ENCODE measurements at regions of chr5 and their contacts with region 1.

Region 1: DNA sequence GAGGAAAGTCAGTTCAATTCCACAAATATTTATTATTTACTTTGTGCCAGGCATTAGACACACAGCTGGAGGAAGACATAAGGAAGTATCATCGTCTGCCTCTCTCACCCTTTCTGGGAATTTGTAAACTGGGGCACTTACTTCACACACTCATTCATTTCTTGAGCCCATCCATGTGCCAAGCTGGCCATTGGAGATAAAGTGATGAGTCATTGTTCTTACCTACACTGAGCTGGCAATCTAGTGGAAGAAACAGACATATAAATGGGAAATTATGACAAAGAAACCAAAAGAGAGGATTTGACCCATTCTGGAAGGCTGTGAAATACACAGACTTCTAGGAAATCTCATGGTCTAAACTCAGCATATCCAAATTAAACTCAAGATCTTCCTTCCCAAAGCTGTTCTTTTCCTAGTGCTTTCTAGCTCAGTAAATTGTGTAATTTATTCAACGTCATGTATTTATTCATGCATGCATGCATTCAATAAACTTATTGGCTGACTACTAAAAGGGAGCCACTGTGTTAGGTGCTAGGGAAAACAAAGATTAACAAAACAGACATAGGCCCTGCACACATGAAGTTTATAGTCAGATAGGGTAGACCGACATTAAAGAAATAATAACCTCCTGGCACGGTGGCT is 65.3 kb downstream of the SH3RF2 start:
- DNase-seq: peak; percentile 92
- H3K4me3 ChIP-seq: no peak overlapping the region
- H3K27ac ChIP-seq: peak overlapping the region; percentile 99
- H3K4me1 ChIP-seq: peaks cover 80% of the 10 kb centered on the region
- H3K27me3 ChIP-seq: no peaks in the 10 kb centered on the region
- CTCF ChIP-seq: no peak

Region 2: GRCh38 chr5:145825751-145826180 is 175.9 kb before region 1 on chr5:
- CTCF ChIA-PET with region 1: interaction called, 3 read pairs
- POLR2A ChIA-PET with region 1: interaction called, 10 read pairs
- intact Hi-C with region 1: loop called (anchors 2 kb)
- DNase-seq: peak; percentile 83
- H3K4me3 ChIP-seq: no peak overlapping the region
- H3K27ac ChIP-seq: no peak overlapping the region
- H3K4me1 ChIP-seq: peaks cover 69% of the 10 kb centered on the region
- H3K27me3 ChIP-seq: no peaks in the 10 kb centered on the region
- CTCF ChIP-seq: peak; percentile 87

Region 3: DNA sequence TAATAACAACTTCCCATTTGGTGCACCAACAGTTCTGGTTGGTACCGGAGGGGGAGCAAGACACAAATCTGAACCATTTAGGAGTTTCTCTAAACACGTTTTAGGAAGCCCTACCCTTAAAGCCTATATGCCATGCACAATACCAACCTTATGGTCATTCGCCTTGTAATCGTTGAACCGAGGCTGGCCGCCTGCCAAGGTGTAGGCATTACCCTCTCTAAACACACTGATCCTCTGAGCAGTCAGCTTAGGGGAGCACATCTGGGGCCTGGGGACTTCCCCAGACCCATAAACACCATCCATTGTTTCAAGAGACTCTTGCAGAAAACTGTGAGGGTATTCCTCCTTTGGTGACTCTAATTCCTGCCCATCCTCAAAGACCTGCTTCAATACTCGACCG is 129.2 kb before region 1 on chr5:
- CTCF ChIA-PET with region 1: no interaction called
- POLR2A ChIA-PET with region 1: no interaction called
- intact Hi-C with region 1: no loop called
- DNase-seq: no peak
- H3K4me3 ChIP-seq: no peak overlapping the region
- H3K27ac ChIP-seq: no peak overlapping the region
- H3K4me1 ChIP-seq: no peaks in the 10 kb centered on the region
- H3K27me3 ChIP-seq: no peaks in the 10 kb centered on the region
- CTCF ChIP-seq: no peak

Region 4: GRCh38 chr5:145925353-145925752 is 76.3 kb before region 1 on chr5:
- CTCF ChIA-PET with region 1: interaction called, 3 read pairs
- POLR2A ChIA-PET with region 1: interaction called, 7 read pairs
- intact Hi-C with region 1: loop called (anchors 1 kb)
- DNase-seq: peak; percentile 88
- H3K4me3 ChIP-seq: no peak overlapping the region
- H3K27ac ChIP-seq: peak overlapping the region; percentile 85
- H3K4me1 ChIP-seq: peaks cover 27% of the 10 kb centered on the region
- H3K27me3 ChIP-seq: no peaks in the 10 kb centered on the region
- CTCF ChIP-seq: no peak

Region 5: DNA sequence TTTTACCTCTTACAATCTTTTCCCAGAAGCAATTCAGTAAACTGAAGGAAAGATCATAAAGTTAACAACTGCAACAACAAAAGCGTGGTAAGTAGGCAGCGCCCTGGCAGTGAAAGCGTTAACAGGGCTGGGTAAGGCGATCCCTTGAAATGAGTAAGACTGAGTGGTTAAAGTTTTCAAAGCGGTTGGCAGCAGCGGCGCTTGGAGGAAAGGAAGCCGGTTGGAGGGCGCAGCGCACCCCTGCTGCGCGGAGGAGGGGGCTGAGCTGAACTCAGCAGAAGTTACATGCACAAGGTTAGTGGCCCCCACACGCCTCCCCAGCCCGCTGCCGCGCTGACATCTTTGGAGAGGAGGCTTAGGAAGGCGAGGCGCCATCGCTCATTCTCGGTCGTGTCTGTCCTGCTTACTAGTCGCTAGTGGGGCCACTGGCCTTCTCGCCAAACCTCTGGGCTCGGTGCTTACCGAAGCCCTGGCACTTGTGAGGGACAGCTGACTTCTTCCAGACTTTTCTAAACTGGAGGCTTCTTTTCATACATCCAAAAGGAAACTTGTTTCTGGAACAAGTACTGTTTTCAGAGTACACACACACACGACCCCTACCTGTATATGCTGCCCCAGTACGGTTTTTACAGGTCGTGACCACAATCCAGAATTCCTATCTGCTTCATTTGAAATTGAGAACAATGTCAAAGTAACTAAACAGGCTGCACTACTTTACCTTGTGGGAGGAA is 65.1 kb before region 1 on chr5 and contains the start of gene SH3RF2:
- CTCF ChIA-PET with region 1: no interaction called
- POLR2A ChIA-PET with region 1: no interaction called
- intact Hi-C with region 1: loop called (anchors 2 kb)
- DNase-seq: peak; percentile 96
- H3K4me3 ChIP-seq: peak within 1 kb of the TSS; percentile 45
- H3K27ac ChIP-seq: peak within 1 kb of the TSS; percentile 83
- H3K4me1 ChIP-seq: peaks cover 69% of the 10 kb centered on the region
- H3K27me3 ChIP-seq: no peaks in the 10 kb centered on the region
- CTCF ChIP-seq: no peak
- total RNA-seq, gene SH3RF2: 21.1 and 22.9 TPM in 2 replicates

Region 6: DNA sequence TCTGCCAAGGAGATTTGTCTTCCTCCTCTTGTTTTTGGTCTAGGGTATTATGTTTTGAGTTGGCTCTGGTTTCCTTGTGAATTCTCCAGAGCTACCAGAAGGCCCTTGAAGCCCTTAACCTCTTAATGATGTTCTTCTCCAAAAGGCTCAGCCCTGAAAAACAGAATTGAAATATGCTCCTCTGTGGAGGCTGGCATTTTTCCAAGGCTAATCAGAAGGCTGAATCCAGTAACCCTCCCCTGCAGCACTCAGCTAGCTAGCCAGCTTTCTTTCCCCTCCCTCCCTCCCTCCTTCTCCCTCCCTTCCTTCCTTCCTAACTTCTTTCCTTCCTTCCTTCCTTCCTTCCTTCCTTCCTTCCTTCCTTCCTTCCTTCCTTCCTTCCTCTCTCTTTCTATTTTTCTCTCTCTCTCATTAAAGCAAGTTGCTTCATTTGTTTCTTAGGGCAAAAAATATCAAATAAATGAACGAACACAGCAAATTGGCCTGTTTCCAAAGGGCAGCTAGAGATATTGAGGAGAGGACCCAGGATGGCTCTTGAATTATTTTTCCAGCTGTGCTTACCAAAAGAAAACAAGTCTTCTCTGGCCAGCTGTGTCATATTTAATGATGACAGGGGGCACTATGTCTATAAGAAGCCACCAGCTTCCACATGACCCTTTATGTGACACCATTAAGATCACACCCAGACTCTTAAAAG is 1742.2 kb after region 1 on chr5:
- CTCF ChIA-PET with region 1: no interaction called
- POLR2A ChIA-PET with region 1: no interaction called
- intact Hi-C with region 1: loop called (anchors 5 kb)
- DNase-seq: peak; percentile 99
- H3K4me3 ChIP-seq: no peak overlapping the region
- H3K27ac ChIP-seq: peak overlapping the region; percentile 97
- H3K4me1 ChIP-seq: peaks cover 91% of the 10 kb centered on the region
- H3K27me3 ChIP-seq: no peaks in the 10 kb centered on the region
- CTCF ChIP-seq: peak; percentile 21; the same call in 1 of the 2 replicates